ENCODE measurements at regions of chr2 and their contacts with region 1.

Region 1: DNA sequence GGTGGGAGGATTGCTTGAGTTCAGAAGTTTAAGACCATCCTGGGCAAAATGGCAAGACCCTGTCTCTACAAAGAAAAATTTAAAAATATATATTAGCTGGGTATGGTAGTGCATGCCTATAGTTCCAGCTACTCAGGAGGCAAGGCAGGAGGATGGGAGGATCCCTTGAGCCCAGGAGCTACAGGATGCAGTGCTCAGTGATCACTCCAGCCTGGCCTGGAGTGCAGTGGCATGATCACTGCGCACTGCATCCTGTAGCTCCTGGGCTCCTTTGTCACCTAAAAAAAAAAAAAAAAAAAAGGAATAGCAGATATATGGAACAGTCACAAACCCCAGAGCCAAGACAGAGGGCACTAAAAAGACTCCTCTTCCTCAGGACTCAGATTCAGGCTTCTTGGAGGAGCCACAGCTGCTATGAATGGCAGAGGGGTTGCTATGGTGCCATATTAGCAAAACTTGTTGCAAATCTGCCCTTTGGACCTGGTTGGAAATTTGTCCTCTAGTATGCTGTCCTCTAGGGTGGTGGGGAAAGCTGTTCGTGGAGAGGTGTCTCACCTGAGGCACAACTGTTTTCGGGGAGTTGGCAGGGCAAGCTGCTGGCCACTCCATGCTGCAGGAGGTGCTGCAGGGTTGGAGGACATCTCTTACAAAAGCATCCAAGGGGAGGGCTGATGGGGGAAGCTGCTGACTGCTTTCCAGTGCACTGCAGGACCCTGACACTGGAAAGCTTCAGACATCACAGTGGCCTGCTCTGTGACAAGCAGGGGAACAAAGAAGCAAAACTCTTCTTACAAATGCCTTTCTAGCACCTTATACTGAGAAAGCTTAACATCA is 22.7 kb downstream of the CYP20A1 start:
- DNase-seq: no peak
- ATAC-seq: no peak
- H3K4me3 ChIP-seq: no peak overlapping the region
- H3K27ac ChIP-seq: no peak overlapping the region
- H3K4me1 ChIP-seq: peaks cover 0 to 3% (median 0%) of the 10 kb centered on the region in 9 donors
- H3K27me3 ChIP-seq: no peaks in the 10 kb centered on the region
- CTCF ChIP-seq: no peak

Region 2: GRCh38 chr2:202858575-202858974 is 403.0 kb before region 1 on chr2:
- intact Hi-C with region 1: no loop called
- DNase-seq: no peak
- ATAC-seq: no peak
- H3K4me3 ChIP-seq: no peak overlapping the region
- H3K27ac ChIP-seq: no peak overlapping the region
- H3K4me1 ChIP-seq: no peaks in the 10 kb centered on the region
- H3K27me3 ChIP-seq: no peaks in the 10 kb centered on the region
- CTCF ChIP-seq: no peak

Region 3: DNA sequence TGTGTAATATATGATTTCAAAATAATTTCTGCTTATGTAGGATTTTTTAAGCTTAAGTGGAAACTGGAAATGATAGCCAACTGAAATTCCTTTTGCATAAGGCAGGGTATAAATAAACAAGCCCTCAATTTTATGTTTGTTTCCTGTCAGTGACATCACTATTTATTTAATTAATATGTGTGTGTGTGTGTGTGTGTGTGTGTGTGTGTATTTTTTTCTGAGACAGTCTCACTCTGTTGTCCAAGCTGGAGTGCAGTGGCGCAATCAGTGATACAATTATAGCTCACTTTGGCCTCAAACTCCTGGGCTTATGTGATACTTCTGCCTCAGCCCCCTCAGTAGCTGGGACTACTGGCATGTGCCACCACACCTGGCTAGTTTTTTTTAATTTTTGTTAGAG is 52.0 kb before region 1 on chr2:
- intact Hi-C with region 1: no loop called
- DNase-seq: no peak
- ATAC-seq: no peak
- H3K4me3 ChIP-seq: no peak overlapping the region
- H3K27ac ChIP-seq: no peak overlapping the region
- H3K4me1 ChIP-seq: no peaks in the 10 kb centered on the region
- H3K27me3 ChIP-seq: no peaks in the 10 kb centered on the region
- CTCF ChIP-seq: no peak

Region 4: DNA sequence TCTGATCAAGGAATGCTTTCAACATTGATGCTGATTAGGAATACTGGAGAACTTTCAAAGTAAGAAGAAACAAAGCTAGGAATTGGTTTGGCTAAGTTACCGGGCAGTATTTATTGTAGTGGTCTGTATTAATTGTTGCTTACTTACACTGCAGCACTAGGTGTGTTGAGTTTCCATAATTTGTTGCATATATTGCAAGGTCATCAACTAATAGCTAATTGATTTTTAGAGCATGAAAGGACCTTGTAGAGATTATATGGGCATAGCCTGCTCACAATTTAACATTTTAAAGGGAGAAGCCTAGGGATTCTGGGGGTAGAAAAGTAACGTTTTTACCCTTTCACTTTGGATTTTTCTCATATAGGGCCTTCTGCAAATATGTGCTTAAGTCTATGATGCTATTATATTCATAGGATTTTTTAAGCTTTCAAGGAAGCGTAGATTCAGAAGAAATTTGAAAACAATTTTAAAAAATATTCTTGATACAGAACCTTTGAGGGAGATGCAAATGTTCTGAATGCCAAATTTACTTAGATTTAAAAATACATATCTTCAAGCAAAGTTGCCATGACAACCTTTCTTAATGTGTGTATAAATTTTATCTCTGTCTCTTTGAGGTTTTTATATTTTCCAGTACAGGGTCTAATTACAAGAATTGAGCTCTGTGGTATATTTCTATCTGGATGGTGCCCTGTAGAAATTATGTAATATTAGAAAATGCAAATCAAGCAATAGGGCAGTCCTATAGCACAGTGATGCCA is 49.3 kb after region 1 on chr2:
- intact Hi-C with region 1: loop called in 1 of 10 experiments (anchors 1 kb)
- DNase-seq: no peak
- ATAC-seq: no peak
- H3K4me3 ChIP-seq: no peak overlapping the region
- H3K27ac ChIP-seq: no peak overlapping the region
- H3K4me1 ChIP-seq: no peaks in the 10 kb centered on the region
- H3K27me3 ChIP-seq: no peaks in the 10 kb centered on the region
- CTCF ChIP-seq: no peak